Activated T-helper 2 cell treated with anti-CD3 and anti-CD28 coated beads, Interferon-gamma antibody, Interleukin-2, Interleukin-4, amounts not matched to agents 10 μg/mL and 5 μg/mL and 100 μg/mL, durations not matched to agents 14 hours and 24 hours and 36 hours (primary cell): ENCODE measurements at regions of chr17 and their contacts with region 1.

Region 1: DNA sequence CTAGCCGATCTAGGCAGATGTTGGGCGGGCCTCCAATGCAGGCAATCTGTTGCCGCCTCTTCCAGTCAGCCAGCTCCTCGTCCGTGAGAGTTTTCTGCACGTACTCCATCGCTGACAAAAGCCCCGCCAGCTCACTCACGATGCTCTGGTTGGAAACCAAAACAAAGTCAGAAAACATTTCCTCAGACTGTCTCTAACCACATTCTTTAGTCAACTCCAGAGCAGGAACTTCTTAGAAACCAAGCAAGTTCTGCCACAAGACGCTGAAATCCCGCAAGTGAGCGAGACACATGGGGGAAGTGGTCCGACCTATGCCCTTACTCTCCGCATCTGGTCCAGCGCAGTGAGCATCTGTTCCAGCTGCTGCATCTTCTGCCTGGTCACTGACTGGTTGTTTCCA is 49.1 kb downstream of the STAT5A start:
- DNase-seq: peak; percentile 77
- H3K4me3 Mint-ChIP-seq: peak overlapping the region; percentile 60
- H3K27ac Mint-ChIP-seq: peak overlapping the region; percentile 90
- H3K4me1 Mint-ChIP-seq: peaks cover 60% of the 10 kb centered on the region
- H3K27me3 Mint-ChIP-seq: no peaks in the 10 kb centered on the region

Region 2: DNA sequence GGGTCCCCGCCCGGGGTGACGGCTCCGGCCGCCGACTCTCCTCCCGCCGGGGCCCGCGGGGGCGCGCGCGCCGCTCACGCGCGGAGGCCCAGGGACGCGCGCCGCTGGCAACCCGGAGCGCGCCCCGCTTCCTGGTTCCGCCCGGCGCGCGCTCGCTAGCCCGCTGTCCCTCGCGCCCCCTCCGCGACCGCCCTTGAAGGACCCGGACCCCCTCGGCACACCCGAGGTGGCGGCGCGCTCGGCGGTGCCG is 61.2 kb before region 1 on chr17 and contains the start of gene STAT5B:
- intact Hi-C with region 1: loop called (anchors 5 kb)
- DNase-seq: peak; percentile 71
- H3K4me3 Mint-ChIP-seq: peak within 1 kb of the TSS; percentile 94
- H3K27ac Mint-ChIP-seq: peak within 1 kb of the TSS; percentile 93
- H3K4me1 Mint-ChIP-seq: peaks cover 39% of the 10 kb centered on the region
- H3K27me3 Mint-ChIP-seq: no peaks in the 10 kb centered on the region
- total RNA-seq, gene STAT5B: 162 and 164 TPM in 2 replicates

Region 3: GRCh38 chr17:42312285-42313130 is 24.9 kb before region 1 on chr17:
- intact Hi-C with region 1: no loop called
- DNase-seq: peak; percentile 72
- H3K4me3 Mint-ChIP-seq: peak overlapping the region; percentile 33
- H3K27ac Mint-ChIP-seq: peak overlapping the region; percentile 68
- H3K4me1 Mint-ChIP-seq: peaks cover 59% of the 10 kb centered on the region
- H3K27me3 Mint-ChIP-seq: no peaks in the 10 kb centered on the region

Region 4: DNA sequence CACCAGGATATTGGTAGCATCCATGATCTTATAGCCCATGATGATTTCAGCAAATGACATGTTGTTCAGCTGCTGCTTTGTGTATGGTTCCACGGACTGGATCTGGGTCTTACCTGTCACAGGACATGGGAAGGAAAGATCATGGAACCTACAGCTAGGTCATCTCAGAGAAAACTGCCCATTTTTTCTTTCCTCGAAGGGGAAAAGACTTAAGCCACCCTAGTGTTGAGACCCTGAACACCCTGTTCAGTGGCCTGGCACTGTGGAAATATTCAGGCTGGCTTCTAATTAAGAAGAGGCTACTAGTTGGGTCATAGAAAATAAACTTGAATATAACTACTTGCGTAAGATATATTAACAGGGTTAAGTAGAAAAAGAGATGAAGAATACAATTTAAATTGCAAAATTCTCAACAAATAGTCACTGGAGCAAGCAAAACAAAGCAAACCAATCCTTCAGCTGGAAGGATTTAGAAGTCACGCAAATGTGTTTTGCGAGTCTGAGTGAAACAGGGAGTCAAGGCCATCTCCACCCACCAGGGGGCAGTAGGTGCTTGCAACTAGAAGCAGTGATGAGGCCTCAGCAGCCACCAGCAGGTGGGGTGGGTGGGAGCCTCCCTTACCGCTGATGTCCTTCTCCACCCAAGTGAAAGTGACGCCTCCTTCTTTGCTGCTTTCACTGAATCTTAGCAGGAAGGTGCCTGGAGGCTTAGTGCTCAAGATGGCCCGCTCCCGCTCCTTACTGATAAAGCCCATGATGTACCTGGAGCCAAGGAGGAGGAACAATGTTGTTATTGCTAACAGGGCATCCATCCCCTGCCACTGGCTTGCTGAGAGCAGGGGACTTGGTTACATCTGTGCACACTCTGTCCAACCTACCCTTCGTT is 14.8 kb before region 1 on chr17:
- intact Hi-C with region 1: loop called (anchors 2 kb)
- DNase-seq: peak; percentile 88
- H3K4me3 Mint-ChIP-seq: no peak overlapping the region
- H3K27ac Mint-ChIP-seq: no peak overlapping the region
- H3K4me1 Mint-ChIP-seq: peaks cover 34% of the 10 kb centered on the region
- H3K27me3 Mint-ChIP-seq: no peaks in the 10 kb centered on the region

Region 5: DNA sequence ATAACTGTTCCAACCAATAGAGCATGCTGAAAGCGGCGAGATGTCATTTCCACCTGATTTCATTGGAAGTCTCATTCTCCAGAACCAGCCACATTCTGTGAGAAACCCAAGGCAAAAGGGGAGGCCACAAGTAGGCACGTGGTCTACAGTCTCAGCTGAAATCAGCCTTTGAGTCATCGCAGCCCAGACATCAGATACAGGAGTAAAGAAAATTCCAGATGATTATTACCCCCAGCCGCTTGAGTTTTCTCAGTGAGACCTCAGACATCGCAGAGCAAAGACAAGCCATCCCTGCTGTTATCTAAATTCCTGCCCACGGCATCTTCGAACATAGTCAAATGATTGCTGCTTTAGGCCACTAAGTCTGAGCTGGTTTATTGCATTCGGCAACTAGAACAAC is 27.7 kb after region 1 on chr17:
- intact Hi-C with region 1: loop called (anchors 1 kb)
- DNase-seq: no peak
- H3K4me3 Mint-ChIP-seq: peak overlapping the region; percentile 35
- H3K27ac Mint-ChIP-seq: peak overlapping the region; percentile 81
- H3K4me1 Mint-ChIP-seq: peaks cover 67% of the 10 kb centered on the region
- H3K27me3 Mint-ChIP-seq: no peaks in the 10 kb centered on the region

Region 6: GRCh38 chr17:42388381-42389134 is 51.1 kb after region 1 on chr17 and contains the start of gene STAT3:
- intact Hi-C with region 1: loop called (anchors 1 kb)
- DNase-seq: peak; percentile 100
- H3K4me3 Mint-ChIP-seq: peak within 1 kb of the TSS; percentile 91
- H3K27ac Mint-ChIP-seq: peak within 1 kb of the TSS; percentile 100
- H3K4me1 Mint-ChIP-seq: peaks cover 39% of the 10 kb centered on the region
- H3K27me3 Mint-ChIP-seq: no peaks in the 10 kb centered on the region
- total RNA-seq, gene STAT3: 250 and 262 TPM in 2 replicates